ENCODE measurements at regions of chr6 and their contacts with region 1.

Region 1: GRCh38 chr6:30130887-30131862 is 4.8 kb upstream of the TRIM40 start:
- DNase-seq: peak in 1 of 2 experiments; percentile 55
- H3K4me3 ChIP-seq: no peak overlapping the region
- H3K27ac ChIP-seq: no peak overlapping the region
- H3K4me1 ChIP-seq: no peaks in the 10 kb centered on the region; a peak in 4 of 7 replicates
- H3K27me3 ChIP-seq: peaks cover 16 to 51% (median 41%) of the 10 kb centered on the region in 4 experiments
- CTCF ChIP-seq: peak; percentile 98 to 100 (median 100)
- EP300 ChIP-seq: no peak
- POLR2A ChIP-seq: no peak
- RAD21 ChIP-seq: peak; percentile 79 to 84

Region 2: GRCh38 chr6:30091577-30092381 is 39.4 kb before region 1 on chr6:
- CTCF ChIA-PET with region 1: interaction called, 12 read pairs
- POLR2A ChIA-PET with region 1: interaction called, 3 read pairs
- DNase-seq: no peak
- H3K4me3 ChIP-seq: no peak overlapping the region
- H3K27ac ChIP-seq: no peak overlapping the region
- H3K4me1 ChIP-seq: peaks cover 0 to 5% (median 0%) of the 10 kb centered on the region in 4 experiments; a peak in 2 of 7 replicates
- H3K27me3 ChIP-seq: peaks cover 0 to 11% (median 0%) of the 10 kb centered on the region in 4 experiments; a peak in 3 of 7 replicates
- CTCF ChIP-seq: no peak
- EP300 ChIP-seq: no peak
- POLR2A ChIP-seq: no peak
- RAD21 ChIP-seq: no peak

Region 3: DNA sequence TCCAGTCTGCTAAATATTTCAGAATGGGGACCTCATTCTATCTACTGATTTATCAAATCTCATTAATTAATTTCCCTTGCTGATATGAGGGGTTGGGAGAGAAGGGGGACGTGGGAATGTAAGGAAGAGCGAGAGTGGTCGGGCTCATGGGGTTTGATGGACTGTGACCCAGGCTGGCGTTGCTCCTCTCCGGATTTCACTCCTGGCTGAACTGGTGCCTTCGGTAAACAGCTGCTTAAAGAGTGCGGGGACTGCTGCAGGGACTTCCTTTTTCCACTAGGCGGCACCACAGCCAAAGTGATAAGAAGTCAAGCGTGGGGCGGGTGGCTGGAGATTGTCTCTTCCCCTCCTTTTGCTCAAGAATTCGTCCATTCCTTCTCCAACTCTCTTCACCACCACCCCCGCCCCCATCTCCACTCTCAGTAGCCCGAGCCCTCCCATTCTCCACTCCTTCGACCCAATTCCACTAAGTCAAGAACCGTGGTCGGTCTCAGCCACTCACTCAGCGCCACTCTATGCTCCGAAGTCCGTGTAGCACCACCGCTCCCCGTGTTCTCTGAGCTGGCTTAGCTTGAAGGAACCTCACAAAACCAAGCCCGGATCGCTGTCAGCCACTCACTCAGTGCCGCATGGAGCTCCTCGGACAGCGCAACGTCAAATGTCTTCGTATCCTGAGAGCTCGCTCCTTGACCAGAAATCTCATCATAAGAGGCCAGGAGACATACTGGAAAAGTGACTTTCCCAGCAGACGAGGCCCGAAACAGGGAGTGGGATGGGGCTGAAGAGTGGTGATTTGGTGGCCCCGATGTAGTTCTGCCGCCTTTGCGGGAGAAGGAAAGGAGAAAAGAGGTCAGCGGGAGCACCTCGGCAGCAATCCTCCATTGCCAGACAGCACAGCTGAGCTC is 28.0 kb before region 1 on chr6:
- CTCF ChIA-PET with region 1: interaction called, 166 read pairs
- POLR2A ChIA-PET with region 1: interaction called, 17 read pairs
- DNase-seq: peak in 1 of 2 experiments; percentile 88
- H3K4me3 ChIP-seq: peak overlapping the region; percentile 34 to 65 (median 58); a peak in 7 of 8 replicates
- H3K27ac ChIP-seq: no peak overlapping the region
- H3K4me1 ChIP-seq: peaks cover 3 to 15% (median 9%) of the 10 kb centered on the region in 4 experiments; a peak in 6 of 7 replicates
- H3K27me3 ChIP-seq: peaks cover 32 to 62% (median 55%) of the 10 kb centered on the region in 4 experiments
- CTCF ChIP-seq: peak; percentile 88 to 95 (median 94)
- EP300 ChIP-seq: no peak; a peak in 1 of 3 replicates
- POLR2A ChIP-seq: no peak
- RAD21 ChIP-seq: peak; percentile 90 to 92

Region 4: DNA sequence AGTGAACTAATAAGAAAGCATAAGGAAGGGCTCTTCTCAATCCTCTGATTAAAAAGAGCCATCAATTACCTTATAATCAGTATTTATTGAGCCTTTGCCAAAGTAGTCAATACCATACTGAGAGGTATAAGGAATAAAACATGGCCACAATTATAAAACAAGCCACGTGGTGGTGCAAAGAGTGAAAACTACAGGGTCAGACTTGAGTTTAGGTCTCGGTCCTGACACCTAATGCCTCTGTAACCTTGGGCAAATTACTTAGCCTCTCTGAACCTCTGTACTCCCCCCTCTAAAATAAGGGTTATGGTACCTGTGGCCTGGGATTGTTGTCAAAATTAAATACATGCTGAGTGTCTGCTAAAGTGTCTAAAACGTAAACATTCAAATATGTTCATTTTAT is 18.1 kb after region 1 on chr6:
- CTCF ChIA-PET with region 1: interaction called, 50 read pairs
- POLR2A ChIA-PET with region 1: interaction called, 3 read pairs
- DNase-seq: no peak
- H3K4me3 ChIP-seq: no peak overlapping the region
- H3K27ac ChIP-seq: no peak overlapping the region
- H3K4me1 ChIP-seq: peaks cover 0 to 4% (median 0%) of the 10 kb centered on the region in 4 experiments; a peak in 2 of 7 replicates
- H3K27me3 ChIP-seq: no peaks in the 10 kb centered on the region; a peak in 1 of 7 replicates
- CTCF ChIP-seq: no peak
- EP300 ChIP-seq: no peak
- POLR2A ChIP-seq: no peak
- RAD21 ChIP-seq: no peak

Region 5: GRCh38 chr6:30163090-30163917 is 32.1 kb after region 1 on chr6 and contains the start of gene TRIM15:
- CTCF ChIA-PET with region 1: interaction called, 29 read pairs
- POLR2A ChIA-PET with region 1: no interaction called
- DNase-seq: no peak
- H3K4me3 ChIP-seq: no peak within 1 kb of the TSS
- H3K27ac ChIP-seq: no peak within 1 kb of the TSS
- H3K4me1 ChIP-seq: peaks cover 0 to 4% (median 2%) of the 10 kb centered on the region in 4 experiments; a peak in 1 of 7 replicates
- H3K27me3 ChIP-seq: peaks cover 0 to 5% (median 2%) of the 10 kb centered on the region in 4 experiments; a peak in 3 of 7 replicates
- CTCF ChIP-seq: no peak
- EP300 ChIP-seq: no peak
- POLR2A ChIP-seq: no peak
- RAD21 ChIP-seq: no peak
- total RNA-seq, gene TRIM15: 0.48 and 0.54 TPM in 2 replicates

Region 6: DNA sequence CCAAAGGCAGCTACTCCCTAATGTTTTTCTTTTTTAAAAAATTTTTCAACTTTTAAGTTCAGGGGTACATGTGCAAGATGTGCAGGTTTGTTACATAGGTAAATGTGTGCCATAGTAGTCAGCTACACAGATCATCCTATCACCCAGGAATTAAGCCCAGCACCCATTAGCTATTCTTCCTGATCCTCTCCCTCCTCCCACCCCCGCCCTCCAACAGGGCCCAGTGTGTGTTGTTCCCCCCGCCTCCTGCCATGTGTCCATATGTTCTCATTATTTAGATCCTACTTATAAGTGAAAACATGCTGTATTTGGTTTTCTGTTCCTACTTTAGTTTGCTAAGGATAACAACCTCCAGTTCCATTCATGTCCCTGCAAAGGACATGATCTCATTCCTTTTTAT is 44.6 kb after region 1 on chr6:
- CTCF ChIA-PET with region 1: interaction called, 10 read pairs
- POLR2A ChIA-PET with region 1: no interaction called
- DNase-seq: no peak
- H3K4me3 ChIP-seq: no peak overlapping the region
- H3K27ac ChIP-seq: no peak overlapping the region
- H3K4me1 ChIP-seq: peaks cover 0 to 4% (median 3%) of the 10 kb centered on the region in 4 experiments; a peak in 4 of 7 replicates
- H3K27me3 ChIP-seq: peaks cover 7 to 24% (median 22%) of the 10 kb centered on the region in 4 experiments
- CTCF ChIP-seq: no peak
- EP300 ChIP-seq: no peak
- POLR2A ChIP-seq: no peak
- RAD21 ChIP-seq: no peak

Region 7: GRCh38 chr6:30287139-30287538 is 156.0 kb after region 1 on chr6:
- CTCF ChIA-PET with region 1: no interaction called
- POLR2A ChIA-PET with region 1: no interaction called
- DNase-seq: no peak
- H3K4me3 ChIP-seq: no peak overlapping the region
- H3K27ac ChIP-seq: no peak overlapping the region
- H3K4me1 ChIP-seq: no peaks in the 10 kb centered on the region
- H3K27me3 ChIP-seq: peaks cover 0 to 2% (median 0%) of the 10 kb centered on the region in 4 experiments; a peak in 1 of 7 replicates
- CTCF ChIP-seq: no peak
- EP300 ChIP-seq: no peak
- POLR2A ChIP-seq: no peak
- RAD21 ChIP-seq: no peak

Measured in H1 (cell line).